ENCODE measurements at regions of chr14 and their contacts with region 1.

Region 1: DNA sequence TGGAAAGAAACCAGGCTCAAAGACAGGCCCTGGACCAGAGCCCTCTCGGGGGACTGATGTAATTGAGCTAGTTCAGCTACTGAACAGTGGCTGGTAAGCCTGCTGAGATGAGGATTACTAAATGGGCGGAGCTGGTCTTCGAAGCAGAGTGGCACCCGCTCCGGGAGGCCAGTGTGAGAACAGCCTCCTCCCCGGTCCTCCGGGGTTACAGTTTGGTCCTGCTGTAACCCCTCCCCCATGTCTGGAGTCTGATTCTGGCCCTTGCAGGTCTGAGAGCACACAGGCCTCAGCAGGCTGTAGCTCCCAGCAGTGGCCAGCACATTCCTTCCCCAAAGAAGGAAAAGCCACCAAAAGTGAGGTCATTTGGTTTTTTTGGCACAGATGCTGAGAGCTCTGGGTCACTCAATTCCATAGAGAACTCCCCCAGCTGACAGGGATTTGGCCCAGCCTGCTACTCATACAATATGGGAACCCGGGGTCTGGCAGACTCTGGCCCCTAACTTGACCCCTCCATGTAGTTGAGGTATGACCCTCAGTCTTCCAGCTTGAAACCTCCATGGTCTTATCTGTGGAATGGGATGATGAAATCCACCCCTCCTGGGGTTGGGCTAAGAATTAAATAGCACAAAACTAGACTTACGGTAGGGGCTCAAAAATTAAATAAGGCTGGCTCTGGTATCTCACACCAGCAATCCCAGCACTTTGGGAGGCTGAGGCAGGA is 39.0 kb downstream of the ACTN1 start:
- DNase-seq: peak; percentile 75
- H3K4me3 ChIP-seq: no peak overlapping the region
- H3K27ac ChIP-seq: peak overlapping the region; percentile 88
- H3K4me1 ChIP-seq: peaks cover 27% of the 10 kb centered on the region
- H3K27me3 ChIP-seq: no peaks in the 10 kb centered on the region
- CTCF ChIP-seq: no peak

Region 2: GRCh38 chr14:68979021-68979782 is 39.1 kb after region 1 on chr14 and contains the start of gene ACTN1:
- intact Hi-C with region 1: loop called (anchors 2 kb)
- DNase-seq: peak; percentile 91
- H3K4me3 ChIP-seq: peak within 1 kb of the TSS; percentile 96
- H3K27ac ChIP-seq: peak within 1 kb of the TSS; percentile 96
- H3K4me1 ChIP-seq: no peaks in the 10 kb centered on the region
- H3K27me3 ChIP-seq: no peaks in the 10 kb centered on the region
- CTCF ChIP-seq: no peak
- total RNA-seq, gene ACTN1: 106 to 185 TPM